ENCODE measurements at regions of chr1 and their contacts with region 1.

Region 1: GRCh38 chr1:20390589-20391331 is 95.2 kb downstream of the CAMK2N1 start:
- DNase-seq: peak; percentile 50
- ATAC-seq: peak; percentile 79
- H3K4me3 ChIP-seq: no peak overlapping the region
- H3K27ac ChIP-seq: no peak overlapping the region
- H3K4me1 ChIP-seq: no peaks in the 10 kb centered on the region
- H3K27me3 ChIP-seq: peaks cover 51% of the 10 kb centered on the region
- CTCF ChIP-seq: no peak
- POLR2A ChIP-seq: no peak
- RAD21 ChIP-seq: no peak

Region 2: DNA sequence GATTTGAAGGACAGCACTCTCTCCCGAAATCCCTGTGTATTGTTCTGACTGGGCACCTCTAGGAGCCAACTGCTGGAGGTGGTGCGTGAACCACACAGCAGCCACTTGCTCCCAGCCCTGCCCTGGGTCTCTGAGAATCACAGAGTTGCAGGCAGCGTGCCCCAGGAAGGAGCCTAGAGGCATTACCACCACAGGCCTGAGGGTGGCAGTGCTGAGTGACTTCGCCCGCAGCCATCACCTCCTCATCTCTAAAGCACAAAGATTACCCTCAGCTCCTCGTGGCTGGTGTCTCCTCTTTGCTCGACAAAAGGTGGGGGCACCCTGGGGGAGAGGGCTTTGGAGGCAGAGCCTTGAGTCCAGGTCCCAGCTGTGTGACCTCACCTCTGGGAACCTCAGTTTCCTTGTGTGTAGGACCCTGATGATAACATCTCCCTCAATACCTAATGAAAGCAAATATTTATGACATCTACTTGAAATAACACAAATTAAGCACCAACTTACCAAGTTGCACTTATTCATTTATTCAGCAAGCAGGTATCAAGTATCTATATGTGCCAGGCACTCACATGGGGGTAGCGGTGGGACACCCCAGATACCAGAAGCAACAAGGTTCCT is 13.8 kb before region 1 on chr1:
- CTCF ChIA-PET with region 1: interaction called, 11 read pairs
- POLR2A ChIA-PET with region 1: no interaction called
- dilution Hi-C with region 1: no loop called
- in situ Hi-C with region 1: no loop called
- intact Hi-C with region 1: no loop called
- DNase-seq: peak; percentile 35
- ATAC-seq: peak; percentile 92
- H3K4me3 ChIP-seq: no peak overlapping the region
- H3K27ac ChIP-seq: no peak overlapping the region
- H3K4me1 ChIP-seq: peaks cover 10% of the 10 kb centered on the region; the same call in 1 of the 2 replicates
- H3K27me3 ChIP-seq: peaks cover 14% of the 10 kb centered on the region; the same call in 1 of the 2 replicates
- CTCF ChIP-seq: peak; percentile 81
- POLR2A ChIP-seq: no peak
- RAD21 ChIP-seq: peak; percentile 75

Measured in IMR-90 (cell line).